ENCODE measurements at regions of chr13 and their contacts with region 1.

Region 1: DNA sequence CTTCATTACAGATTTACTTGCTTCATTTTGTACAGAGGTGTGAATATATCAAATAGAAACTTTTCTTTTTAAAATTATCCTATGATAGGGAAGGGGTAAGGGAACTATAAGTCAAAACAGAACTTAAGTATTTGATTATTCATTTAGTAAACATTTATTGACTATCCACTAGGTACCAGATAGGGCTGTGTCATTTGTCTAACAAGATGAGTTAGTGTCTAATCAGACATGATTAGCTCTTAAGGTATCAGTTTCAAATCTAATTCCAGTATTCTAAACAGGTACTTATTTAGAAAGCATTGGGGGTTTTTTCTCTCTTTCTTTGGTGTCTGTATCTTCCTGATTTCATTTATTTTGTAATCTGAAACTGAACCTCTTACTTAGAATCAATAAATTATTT is 32.2 kb downstream of the CDADC1 start:
- H3K4me3 Mint-ChIP-seq: no peak overlapping the region
- H3K27ac Mint-ChIP-seq: no peak overlapping the region
- H3K4me1 Mint-ChIP-seq: no peaks in the 10 kb centered on the region
- H3K27me3 Mint-ChIP-seq: no peaks in the 10 kb centered on the region

Region 2: DNA sequence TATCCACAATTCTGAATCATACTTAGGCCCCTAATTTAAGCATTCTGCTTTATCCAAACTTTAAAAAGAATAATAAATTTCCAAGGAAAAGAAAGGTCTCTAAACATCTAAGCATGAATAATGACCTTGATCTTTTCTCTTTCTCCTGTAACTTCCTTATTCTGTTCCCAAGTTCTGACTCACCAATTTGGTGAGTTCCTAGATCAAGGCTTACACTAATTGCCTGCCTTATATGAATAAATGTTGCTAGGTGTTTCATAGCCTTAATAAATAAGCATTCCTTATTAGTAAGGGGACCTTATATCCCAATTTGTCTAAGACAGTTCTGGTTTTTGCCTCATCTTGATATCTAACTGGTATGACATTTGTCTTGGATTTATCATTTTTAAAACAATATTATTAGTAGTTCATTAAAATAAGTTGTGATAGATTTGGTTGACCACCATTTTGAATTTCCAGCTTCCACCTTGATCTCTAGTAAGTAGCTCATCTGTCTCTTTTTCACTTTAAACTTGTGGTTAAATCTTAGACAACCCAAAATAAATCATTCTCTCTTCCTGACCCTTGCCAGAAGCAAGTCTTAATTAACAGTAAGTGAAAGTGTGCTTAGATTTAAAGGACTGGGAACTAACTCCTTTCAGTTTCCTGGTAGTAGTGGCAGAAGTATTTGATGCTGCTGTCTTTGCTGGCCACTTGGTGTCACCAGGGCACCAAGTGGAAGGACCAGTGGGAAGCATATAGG is 180.9 kb before region 1 on chr13:
- intact Hi-C with region 1: loop called (anchors 2 kb)
- H3K4me3 Mint-ChIP-seq: no peak overlapping the region
- H3K27ac Mint-ChIP-seq: peak overlapping the region; percentile 56
- H3K4me1 Mint-ChIP-seq: peaks cover 24% of the 10 kb centered on the region
- H3K27me3 Mint-ChIP-seq: no peaks in the 10 kb centered on the region

Region 3: GRCh38 chr13:49240017-49240416 is 39.9 kb before region 1 on chr13:
- intact Hi-C with region 1: loop called (anchors 2 kb)
- H3K4me3 Mint-ChIP-seq: no peak overlapping the region
- H3K27ac Mint-ChIP-seq: no peak overlapping the region
- H3K4me1 Mint-ChIP-seq: no peaks in the 10 kb centered on the region
- H3K27me3 Mint-ChIP-seq: no peaks in the 10 kb centered on the region